A673 (cell line): ENCODE measurements at regions of chr2 and their contacts with region 1.

Region 1: DNA sequence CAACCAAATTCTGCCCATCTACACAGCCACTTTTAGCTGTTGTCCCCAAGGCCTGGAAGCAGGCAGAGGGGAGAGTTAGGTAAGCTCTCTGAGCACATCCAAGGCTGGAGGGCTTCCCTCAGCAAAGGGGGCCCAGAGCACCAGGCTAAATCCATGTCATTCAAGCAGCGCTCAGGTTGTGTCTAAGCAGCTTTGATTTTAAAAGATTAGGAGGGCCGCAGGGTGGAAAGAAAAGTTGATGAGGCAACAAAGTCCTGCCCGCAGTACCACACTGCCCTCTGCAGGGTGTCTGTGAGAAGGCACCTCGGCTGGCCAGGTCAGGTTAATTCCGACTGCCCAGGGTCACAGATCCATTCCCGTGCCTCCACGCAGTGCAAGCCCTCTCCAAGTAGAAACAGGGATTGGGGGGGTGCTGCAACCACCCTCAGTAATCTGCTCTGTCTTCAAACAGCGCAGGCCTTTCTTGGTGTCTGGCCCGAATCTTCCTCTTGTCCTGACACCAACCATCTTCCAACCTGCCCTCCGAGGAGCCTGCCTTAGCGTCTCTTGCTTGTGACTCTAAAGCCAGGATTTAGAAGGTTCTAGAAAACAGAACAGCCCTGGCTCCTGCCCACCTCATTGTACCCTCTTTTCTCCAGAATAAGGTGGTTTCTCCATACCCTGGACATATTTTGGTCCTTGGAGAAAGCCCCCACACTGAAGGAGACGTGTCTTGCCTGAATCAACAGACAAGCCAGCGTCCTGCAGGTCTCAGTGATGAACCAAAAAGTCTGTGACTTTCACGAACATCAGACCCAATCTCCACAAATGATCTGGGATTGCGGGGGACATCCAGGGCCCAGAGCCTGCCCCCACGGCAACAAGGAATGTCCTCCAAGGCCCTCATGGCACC is 289.2 kb downstream of the TNS1 start:
- DNase-seq: peak; percentile 71
- H3K4me3 ChIP-seq: no peak overlapping the region
- H3K27ac ChIP-seq: no peak overlapping the region
- H3K4me1 ChIP-seq: no peaks in the 10 kb centered on the region
- H3K27me3 ChIP-seq: no peaks in the 10 kb centered on the region
- CTCF ChIP-seq: peak; percentile 96

Region 2: GRCh38 chr2:216687646-216688045 is 1026.0 kb before region 1 on chr2:
- CTCF ChIA-PET with region 1: interaction called, 7 read pairs
- POLR2A ChIA-PET with region 1: no interaction called
- intact Hi-C with region 1: loop called (anchors 5 kb)
- DNase-seq: no peak
- H3K4me3 ChIP-seq: no peak overlapping the region
- H3K27ac ChIP-seq: no peak overlapping the region
- H3K4me1 ChIP-seq: peaks cover 12% of the 10 kb centered on the region
- H3K27me3 ChIP-seq: no peaks in the 10 kb centered on the region
- CTCF ChIP-seq: peak; percentile 65

Region 3: DNA sequence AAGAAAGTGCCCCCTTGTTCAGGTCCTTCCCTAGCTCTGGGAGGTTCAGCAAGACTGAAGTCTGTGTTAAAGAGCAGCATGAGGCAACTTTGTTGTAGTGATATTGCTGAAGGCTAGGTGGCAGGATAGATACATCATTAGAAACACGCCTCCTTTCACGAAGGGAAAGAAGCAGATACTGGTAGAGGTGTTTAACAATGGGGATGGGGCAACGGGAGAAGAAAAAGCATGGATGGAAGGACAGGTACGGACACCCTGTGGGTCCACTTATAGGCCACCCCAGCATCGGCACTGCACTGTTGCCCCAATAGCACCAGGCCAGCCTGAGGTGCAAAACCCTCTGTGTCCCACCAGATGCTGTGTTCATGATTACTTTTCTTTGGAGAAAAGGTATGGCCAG is 1014.7 kb before region 1 on chr2:
- CTCF ChIA-PET with region 1: interaction called, 6 read pairs
- POLR2A ChIA-PET with region 1: no interaction called
- intact Hi-C with region 1: loop called (anchors 5 kb)
- DNase-seq: peak; percentile 76
- H3K4me3 ChIP-seq: no peak overlapping the region
- H3K27ac ChIP-seq: no peak overlapping the region
- H3K4me1 ChIP-seq: peaks cover 44% of the 10 kb centered on the region
- H3K27me3 ChIP-seq: no peaks in the 10 kb centered on the region
- CTCF ChIP-seq: peak; percentile 81

Region 4: GRCh38 chr2:216777650-216778273 is 935.9 kb before region 1 on chr2:
- CTCF ChIA-PET with region 1: interaction called, 4 read pairs
- POLR2A ChIA-PET with region 1: no interaction called
- intact Hi-C with region 1: loop called (anchors 5 kb)
- DNase-seq: peak; percentile 88
- H3K4me3 ChIP-seq: no peak overlapping the region
- H3K27ac ChIP-seq: no peak overlapping the region
- H3K4me1 ChIP-seq: no peaks in the 10 kb centered on the region
- H3K27me3 ChIP-seq: no peaks in the 10 kb centered on the region
- CTCF ChIP-seq: peak; percentile 90

Region 5: DNA sequence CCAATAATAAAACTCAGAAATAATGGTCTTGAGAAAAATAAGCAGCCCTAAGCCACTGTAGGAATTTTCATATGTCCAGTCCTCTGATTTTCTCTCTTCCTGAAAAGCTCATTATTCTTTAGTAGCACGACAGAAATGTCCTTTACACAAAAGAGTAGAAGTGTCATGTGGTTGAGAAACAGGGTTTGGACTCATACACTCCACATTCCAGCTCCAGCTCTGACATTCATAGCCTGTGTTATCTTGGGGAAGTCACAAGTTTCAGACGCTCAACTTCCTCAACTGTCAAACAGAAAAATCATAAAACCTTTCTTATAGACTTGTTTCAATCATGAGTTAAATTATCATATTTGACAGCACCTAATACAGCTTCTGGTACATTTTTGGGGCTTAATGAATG is 222.4 kb before region 1 on chr2:
- CTCF ChIA-PET with region 1: no interaction called
- POLR2A ChIA-PET with region 1: no interaction called
- intact Hi-C with region 1: no loop called
- DNase-seq: no peak
- H3K4me3 ChIP-seq: no peak overlapping the region
- H3K27ac ChIP-seq: no peak overlapping the region
- H3K4me1 ChIP-seq: peaks cover 3% of the 10 kb centered on the region
- H3K27me3 ChIP-seq: no peaks in the 10 kb centered on the region
- CTCF ChIP-seq: no peak

Region 6: GRCh38 chr2:217527590-217528202 is 185.9 kb before region 1 on chr2:
- CTCF ChIA-PET with region 1: no interaction called
- POLR2A ChIA-PET with region 1: no interaction called
- intact Hi-C with region 1: loop called (anchors 5 kb)
- DNase-seq: no peak
- H3K4me3 ChIP-seq: no peak overlapping the region
- H3K27ac ChIP-seq: no peak overlapping the region
- H3K4me1 ChIP-seq: no peaks in the 10 kb centered on the region
- H3K27me3 ChIP-seq: no peaks in the 10 kb centered on the region
- CTCF ChIP-seq: no peak